ENCODE measurements at regions of chr1 and their contacts with region 1.

Region 1: DNA sequence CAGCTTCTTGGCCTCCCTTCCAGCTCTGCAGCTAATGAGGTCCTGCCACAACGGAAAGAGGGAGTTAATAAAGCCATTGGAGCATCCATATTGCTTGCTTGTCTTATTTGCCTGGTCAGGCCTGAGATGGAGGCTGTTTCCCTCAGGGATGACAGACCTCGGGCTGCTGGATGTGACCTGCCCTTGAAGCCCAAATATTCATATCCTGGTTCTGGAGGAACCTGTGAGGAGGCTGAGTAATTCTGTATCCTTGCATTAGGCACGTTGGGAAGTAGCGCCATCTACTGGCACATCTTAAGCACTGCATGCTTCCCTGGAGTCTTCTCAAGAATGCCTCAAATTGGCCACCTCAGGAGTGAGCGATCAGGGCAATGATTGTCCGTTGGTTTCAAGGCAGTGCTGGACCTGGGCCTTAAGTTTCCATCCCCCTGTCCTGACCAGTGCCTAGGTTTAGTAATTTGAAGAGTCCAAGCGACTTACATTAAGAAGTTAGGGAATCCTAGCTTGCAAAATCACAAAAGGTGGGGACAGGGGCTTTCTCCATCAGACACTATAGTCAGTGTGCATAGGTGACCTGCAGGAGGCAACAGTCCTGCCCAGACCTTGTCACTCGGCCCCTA is 13.8 kb upstream of the NASP start:
- DNase-seq: peak; percentile 83
- ATAC-seq: peak; percentile 90
- H3K4me3 Mint-ChIP-seq: no peak overlapping the region
- H3K27ac Mint-ChIP-seq: no peak overlapping the region
- H3K4me1 Mint-ChIP-seq: no peaks in the 10 kb centered on the region
- H3K27me3 Mint-ChIP-seq: no peaks in the 10 kb centered on the region

Region 2: GRCh38 chr1:45490626-45491486 is 79.2 kb before region 1 on chr1 and contains the start of gene TESK2:
- CTCF ChIA-PET with region 1: interaction called, 35 read pairs
- POLR2A ChIA-PET with region 1: no interaction called
- DNase-seq: peak; percentile 98
- ATAC-seq: peak; percentile 99
- H3K4me3 Mint-ChIP-seq: no peak within 1 kb of the TSS
- H3K27ac Mint-ChIP-seq: no peak within 1 kb of the TSS
- H3K4me1 Mint-ChIP-seq: peaks cover 12% of the 10 kb centered on the region
- H3K27me3 Mint-ChIP-seq: peaks cover 5% of the 10 kb centered on the region
- total RNA-seq, gene TESK2: 3.3 to 3.5 TPM

Region 3: DNA sequence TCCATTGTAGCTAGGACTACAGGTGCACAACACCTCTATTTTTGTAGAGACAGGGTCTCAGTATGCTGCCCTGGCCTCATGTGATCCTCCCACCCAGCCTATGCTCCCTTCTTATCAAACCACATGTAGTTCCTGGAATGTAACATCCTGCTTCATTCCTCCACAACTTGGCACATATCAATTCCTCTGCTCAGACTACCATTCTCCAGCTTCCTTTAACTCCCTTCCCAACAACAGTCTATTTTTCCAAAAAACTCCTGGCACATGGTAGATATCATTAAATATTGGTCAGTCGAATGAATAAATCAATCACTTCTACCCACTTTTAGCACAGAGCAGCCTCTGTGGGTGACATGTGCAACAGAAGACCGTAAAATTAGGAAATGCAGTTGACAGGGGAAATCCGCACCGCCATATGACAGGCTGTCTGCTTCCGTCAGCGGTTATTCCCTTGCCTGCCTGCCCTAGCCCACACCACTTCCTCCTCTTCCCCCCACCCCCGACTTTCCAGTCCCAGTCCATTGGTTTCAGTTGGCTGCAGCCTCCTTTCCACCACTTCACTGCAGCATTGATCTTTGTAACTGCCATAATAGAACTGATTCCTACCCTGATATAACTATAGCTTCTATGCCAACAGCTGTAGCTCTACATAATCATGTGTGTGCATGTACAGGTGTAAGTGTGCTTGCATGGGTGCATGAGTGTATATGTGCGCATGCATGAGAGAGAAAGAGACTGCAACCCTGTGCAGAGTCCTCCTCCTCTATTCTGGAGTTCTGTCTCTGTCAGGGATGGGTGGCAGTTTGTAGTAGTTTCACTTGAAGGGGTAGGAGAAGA is 26.3 kb before region 1 on chr1:
- CTCF ChIA-PET with region 1: interaction called, 22 read pairs
- POLR2A ChIA-PET with region 1: no interaction called
- DNase-seq: peak; percentile 74
- ATAC-seq: peak; percentile 91
- H3K4me3 Mint-ChIP-seq: peak overlapping the region; percentile 28
- H3K27ac Mint-ChIP-seq: peak overlapping the region; percentile 36
- H3K4me1 Mint-ChIP-seq: peaks cover 32% of the 10 kb centered on the region
- H3K27me3 Mint-ChIP-seq: peaks cover 3% of the 10 kb centered on the region

Region 4: DNA sequence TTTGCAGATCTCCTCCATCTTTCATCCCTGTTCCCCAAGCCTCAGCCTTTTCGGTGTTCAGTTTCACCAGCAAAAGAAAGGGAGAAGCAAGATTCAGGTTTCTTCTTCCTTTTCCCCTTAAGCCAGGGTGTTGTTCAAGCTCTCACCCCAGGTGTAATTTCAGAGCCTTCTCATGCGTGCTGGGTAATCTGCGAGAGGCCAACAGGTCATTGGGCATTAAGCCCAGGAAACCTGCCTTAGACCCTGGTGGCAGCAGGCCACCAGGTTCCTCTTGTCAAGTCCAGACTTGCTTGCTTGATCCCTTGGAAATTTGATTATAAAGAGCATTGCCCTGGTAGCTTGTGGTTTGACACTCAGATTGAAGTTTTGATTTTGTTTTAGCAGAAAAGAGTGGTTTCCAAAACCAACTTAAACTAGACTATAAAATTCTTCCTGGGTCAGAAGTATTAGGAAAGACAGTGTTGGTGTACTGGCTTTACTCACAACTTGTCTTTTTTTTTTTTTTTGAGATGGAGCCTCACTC is 12.6 kb before region 1 on chr1:
- CTCF ChIA-PET with region 1: interaction called, 16 read pairs
- POLR2A ChIA-PET with region 1: interaction called, 5 read pairs
- DNase-seq: no peak
- ATAC-seq: no peak
- H3K4me3 Mint-ChIP-seq: no peak overlapping the region
- H3K27ac Mint-ChIP-seq: peak overlapping the region; percentile 54
- H3K4me1 Mint-ChIP-seq: peaks cover 19% of the 10 kb centered on the region
- H3K27me3 Mint-ChIP-seq: no peaks in the 10 kb centered on the region

Region 5: DNA sequence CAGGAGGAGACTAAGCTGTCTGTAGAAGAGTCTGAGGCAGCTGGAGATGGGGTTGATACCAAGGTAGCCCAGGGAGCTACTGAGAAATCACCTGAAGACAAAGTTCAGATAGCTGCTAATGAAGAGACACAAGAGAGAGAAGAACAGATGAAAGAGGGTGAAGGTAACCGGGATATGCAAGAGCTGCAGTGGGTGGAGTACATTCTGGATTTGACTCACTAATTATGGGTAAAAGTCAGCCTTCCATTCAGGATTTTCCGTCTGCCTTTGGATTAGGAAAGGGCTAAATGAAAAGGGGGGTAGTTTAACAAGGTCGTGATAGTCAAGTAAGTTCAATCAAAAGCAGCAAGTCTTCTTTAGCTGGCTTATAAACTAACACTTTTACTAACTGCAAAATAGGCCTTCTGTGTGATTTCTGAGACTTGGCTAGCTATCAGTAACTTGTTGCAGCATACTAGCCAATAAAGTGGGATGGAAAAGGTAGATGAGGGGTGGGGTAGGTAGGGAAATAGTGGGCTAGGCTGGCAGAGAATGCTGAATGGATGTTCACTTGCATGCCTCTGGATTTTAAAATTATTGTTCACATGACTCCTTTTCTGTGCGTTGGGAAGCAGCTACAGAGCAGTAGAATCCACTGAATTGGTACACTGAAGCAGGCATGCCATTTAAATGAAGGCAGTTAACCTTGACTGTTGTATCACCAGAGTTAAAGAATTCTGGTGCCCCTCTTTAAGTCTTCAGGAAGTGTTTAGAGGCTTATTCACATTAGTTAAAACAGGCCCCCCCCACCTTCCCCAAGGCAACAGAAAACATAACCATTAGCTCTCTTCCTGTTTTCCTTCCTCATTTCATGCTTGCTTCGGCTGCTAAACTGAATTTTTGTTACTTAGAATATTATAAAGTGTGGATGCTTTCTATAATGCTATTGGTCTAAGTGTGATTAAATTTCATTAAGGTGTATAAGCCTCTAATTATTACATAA is 38.4 kb after region 1 on chr1:
- CTCF ChIA-PET with region 1: no interaction called
- POLR2A ChIA-PET with region 1: no interaction called
- DNase-seq: no peak
- ATAC-seq: no peak
- H3K4me3 Mint-ChIP-seq: no peak overlapping the region
- H3K27ac Mint-ChIP-seq: peak overlapping the region; percentile 74
- H3K4me1 Mint-ChIP-seq: peaks cover 30% of the 10 kb centered on the region
- H3K27me3 Mint-ChIP-seq: no peaks in the 10 kb centered on the region